GM12878 (cell line): ENCODE measurements at regions of chr1 and their contacts with region 1.

Region 1: DNA sequence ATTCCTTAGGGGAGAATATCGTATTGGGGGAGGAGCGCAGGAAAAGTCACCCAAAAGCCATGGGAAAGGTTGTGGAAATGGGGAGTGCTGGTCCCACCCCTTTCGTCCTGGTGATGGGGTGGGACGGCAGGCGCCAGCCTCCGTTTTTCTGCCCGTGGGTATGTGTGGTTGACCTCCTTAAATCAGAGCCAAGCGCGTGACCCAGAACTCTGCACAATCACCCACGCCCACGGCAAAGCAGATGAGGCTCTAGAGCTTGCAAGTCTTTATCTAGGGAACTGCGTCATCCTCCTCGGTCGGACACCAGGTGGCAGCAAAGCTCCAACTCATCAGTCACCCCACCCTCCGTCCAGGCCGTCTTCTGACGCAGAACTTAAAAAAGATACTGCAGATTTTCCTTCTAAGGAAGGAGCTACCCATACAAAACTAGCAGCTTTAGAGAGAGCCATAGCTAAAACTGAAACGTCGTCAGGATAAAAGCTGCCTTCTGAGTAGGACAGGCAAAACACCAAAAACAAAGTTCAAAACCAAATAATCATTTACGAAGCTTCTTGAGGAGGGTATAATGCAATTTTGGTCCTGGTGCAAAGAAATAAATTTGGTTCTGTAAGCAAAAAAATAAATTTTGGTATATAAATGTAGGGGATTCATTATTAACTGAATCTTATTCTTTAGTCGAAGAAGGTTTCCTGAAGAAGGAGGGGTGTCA is 62.0 kb downstream of the TBX19 start:
- DNase-seq: peak; percentile 61
- ATAC-seq: peak; percentile 98
- H3K4me3 ChIP-seq: no peak overlapping the region
- H3K27ac ChIP-seq: no peak overlapping the region
- H3K4me1 ChIP-seq: peaks cover 10% of the 10 kb centered on the region
- H3K27me3 ChIP-seq: no peaks in the 10 kb centered on the region
- CTCF ChIP-seq: peak; percentile 73 to 91 (median 82)
- EP300 ChIP-seq: no peak
- POLR2A ChIP-seq: no peak
- RAD21 ChIP-seq: peak; percentile 86

Region 2: DNA sequence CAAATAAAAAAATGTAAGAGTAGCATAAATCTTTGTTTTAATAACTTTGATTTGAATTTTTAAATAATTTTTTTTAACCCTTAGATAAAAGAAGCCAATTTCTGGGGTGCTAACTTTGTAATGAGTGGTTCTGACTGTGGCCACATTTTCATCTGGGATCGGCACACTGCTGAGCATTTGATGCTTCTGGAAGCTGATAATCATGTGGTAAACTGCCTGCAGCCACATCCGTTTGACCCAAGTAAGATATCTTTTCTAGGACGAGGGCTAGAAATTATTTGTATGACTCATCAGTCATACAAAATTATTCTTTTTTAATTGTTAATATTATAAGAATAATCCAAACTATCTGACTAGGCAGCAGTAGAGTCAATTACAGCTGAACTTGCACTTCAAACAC is 277.2 kb before region 1 on chr1:
- CTCF ChIA-PET with region 1: no interaction called
- POLR2A ChIA-PET with region 1: no interaction called
- RAD21 ChIA-PET with region 1: no interaction called
- SMC1A ChIA-PET with region 1: no interaction called
- in situ Hi-C with region 1: no loop called
- intact Hi-C with region 1: no loop called
- DNase-seq: no peak
- ATAC-seq: no peak
- H3K4me3 ChIP-seq: no peak overlapping the region
- H3K27ac ChIP-seq: no peak overlapping the region
- H3K4me1 ChIP-seq: no peaks in the 10 kb centered on the region
- H3K27me3 ChIP-seq: no peaks in the 10 kb centered on the region
- CTCF ChIP-seq: no peak
- EP300 ChIP-seq: no peak
- POLR2A ChIP-seq: no peak
- RAD21 ChIP-seq: no peak

Region 3: DNA sequence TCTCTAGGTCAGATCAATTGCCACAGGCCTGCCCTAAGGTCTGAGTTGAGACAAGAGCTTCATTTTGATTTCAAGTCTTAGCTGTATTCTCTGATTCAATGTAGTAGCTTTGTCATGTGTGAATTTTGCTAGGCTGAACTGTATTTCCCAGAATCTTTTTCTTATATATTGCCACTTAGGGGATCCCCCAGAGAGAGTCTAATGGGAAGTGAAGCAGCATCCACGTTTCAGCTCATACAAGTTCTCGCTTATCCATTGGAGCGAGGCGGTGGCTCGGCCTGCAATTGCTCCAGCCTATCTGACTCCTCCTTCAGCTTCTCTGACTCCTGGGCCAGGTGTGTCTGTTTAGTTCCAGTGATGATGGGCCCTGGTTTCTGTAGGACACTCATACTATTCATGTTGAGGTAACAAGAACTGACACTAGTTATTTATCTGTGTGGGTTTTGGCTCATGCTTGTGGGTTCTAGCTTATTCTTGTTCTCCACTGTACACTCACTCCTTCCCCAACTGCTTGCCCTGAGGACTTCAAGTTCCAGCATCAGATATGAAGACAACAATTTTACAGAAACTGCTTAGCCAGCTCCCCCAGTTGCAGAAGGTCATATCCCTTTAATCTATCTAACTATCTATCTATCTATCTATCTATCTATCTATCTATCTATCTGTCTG is 13.9 kb before region 1 on chr1:
- CTCF ChIA-PET with region 1: interaction called, 43 read pairs
- POLR2A ChIA-PET with region 1: no interaction called
- RAD21 ChIA-PET with region 1: interaction called, 8 read pairs
- SMC1A ChIA-PET with region 1: interaction called, 12 read pairs
- in situ Hi-C with region 1: no loop called
- intact Hi-C with region 1: no loop called
- DNase-seq: no peak
- ATAC-seq: no peak
- H3K4me3 ChIP-seq: no peak overlapping the region
- H3K27ac ChIP-seq: no peak overlapping the region
- H3K4me1 ChIP-seq: no peaks in the 10 kb centered on the region
- H3K27me3 ChIP-seq: no peaks in the 10 kb centered on the region
- CTCF ChIP-seq: no peak
- EP300 ChIP-seq: no peak
- POLR2A ChIP-seq: no peak
- RAD21 ChIP-seq: no peak

Region 4: GRCh38 chr1:168408536-168409242 is 66.0 kb after region 1 on chr1:
- CTCF ChIA-PET with region 1: interaction called, 6 read pairs
- POLR2A ChIA-PET with region 1: no interaction called
- RAD21 ChIA-PET with region 1: interaction called, 14 read pairs
- SMC1A ChIA-PET with region 1: interaction called, 11 read pairs
- in situ Hi-C with region 1: no loop called
- intact Hi-C with region 1: no loop called
- DNase-seq: peak; percentile 42
- ATAC-seq: peak; percentile 89
- H3K4me3 ChIP-seq: no peak overlapping the region
- H3K27ac ChIP-seq: no peak overlapping the region
- H3K4me1 ChIP-seq: no peaks in the 10 kb centered on the region
- H3K27me3 ChIP-seq: no peaks in the 10 kb centered on the region
- CTCF ChIP-seq: no peak
- EP300 ChIP-seq: peak in 1 of 2 experiments; percentile 49; a peak in 1 of 4 replicates
- POLR2A ChIP-seq: no peak
- RAD21 ChIP-seq: no peak

Region 5: DNA sequence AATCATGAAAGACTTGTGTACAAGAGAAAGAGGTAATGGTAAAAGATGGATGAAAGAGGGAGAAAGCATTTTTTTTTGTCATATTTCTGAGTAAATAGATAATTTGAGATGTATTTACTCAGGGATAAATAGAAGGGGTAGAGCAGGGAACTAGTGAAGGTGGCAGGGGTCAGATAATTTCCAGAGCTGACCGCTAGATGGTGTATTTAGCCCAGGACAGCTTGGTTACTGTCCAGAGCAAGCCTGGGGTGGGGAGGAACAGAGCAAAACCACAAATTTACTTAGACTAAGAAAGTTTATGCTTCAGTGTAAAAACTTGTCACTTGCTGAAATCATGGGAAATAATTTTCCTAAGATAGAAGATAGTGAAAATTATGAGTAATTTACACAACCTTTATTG is 109.6 kb after region 1 on chr1:
- CTCF ChIA-PET with region 1: interaction called, 283 read pairs
- POLR2A ChIA-PET with region 1: no interaction called
- RAD21 ChIA-PET with region 1: interaction called, 25 read pairs
- SMC1A ChIA-PET with region 1: interaction called, 7 read pairs
- in situ Hi-C with region 1: no loop called
- intact Hi-C with region 1: no loop called
- DNase-seq: no peak
- ATAC-seq: peak; percentile 63
- H3K4me3 ChIP-seq: no peak overlapping the region
- H3K27ac ChIP-seq: no peak overlapping the region
- H3K4me1 ChIP-seq: no peaks in the 10 kb centered on the region
- H3K27me3 ChIP-seq: no peaks in the 10 kb centered on the region
- CTCF ChIP-seq: peak; percentile 24 to 32 (median 29); a peak in 2 of 6 replicates
- EP300 ChIP-seq: no peak
- POLR2A ChIP-seq: no peak
- RAD21 ChIP-seq: peak; percentile 42

Region 6: DNA sequence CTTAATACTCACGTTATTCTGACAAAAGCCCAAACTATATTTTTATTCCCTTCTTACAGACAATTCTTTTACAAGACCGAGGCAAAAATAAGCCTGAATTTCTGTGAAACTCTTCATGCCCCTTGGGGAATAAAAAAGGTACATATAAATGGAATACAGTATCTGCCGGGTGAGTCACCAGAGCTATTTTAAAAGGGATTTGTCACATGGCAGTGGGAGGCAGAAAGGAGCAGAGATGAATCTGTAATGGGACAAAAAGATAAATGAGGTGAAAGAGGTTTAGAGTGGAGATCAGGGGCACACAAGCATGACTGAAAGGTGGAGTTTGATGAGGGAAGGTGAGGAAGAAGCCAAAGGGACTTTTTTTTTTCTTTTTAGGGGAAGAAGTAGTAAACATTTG is 242.5 kb after region 1 on chr1:
- CTCF ChIA-PET with region 1: interaction called, 8 read pairs
- POLR2A ChIA-PET with region 1: no interaction called
- RAD21 ChIA-PET with region 1: interaction called, 18 read pairs
- SMC1A ChIA-PET with region 1: interaction called, 16 read pairs
- in situ Hi-C with region 1: no loop called
- intact Hi-C with region 1: no loop called
- DNase-seq: no peak
- ATAC-seq: no peak
- H3K4me3 ChIP-seq: no peak overlapping the region
- H3K27ac ChIP-seq: no peak overlapping the region
- H3K4me1 ChIP-seq: no peaks in the 10 kb centered on the region
- H3K27me3 ChIP-seq: peaks cover 0 to 2% of the 10 kb centered on the region in 2 experiments; a peak in 1 of 4 replicates
- CTCF ChIP-seq: no peak
- EP300 ChIP-seq: no peak
- POLR2A ChIP-seq: no peak
- RAD21 ChIP-seq: no peak

Region 7: GRCh38 chr1:169348383-169349036 is 1005.8 kb after region 1 on chr1:
- CTCF ChIA-PET with region 1: interaction called, 74 read pairs
- POLR2A ChIA-PET with region 1: no interaction called
- RAD21 ChIA-PET with region 1: interaction called, 57 read pairs
- SMC1A ChIA-PET with region 1: interaction called, 53 read pairs
- in situ Hi-C with region 1: no loop called
- intact Hi-C with region 1: loop called (anchors 1 kb)
- DNase-seq: peak; percentile 19
- ATAC-seq: peak; percentile 61
- H3K4me3 ChIP-seq: no peak overlapping the region
- H3K27ac ChIP-seq: no peak overlapping the region
- H3K4me1 ChIP-seq: no peaks in the 10 kb centered on the region
- H3K27me3 ChIP-seq: no peaks in the 10 kb centered on the region
- CTCF ChIP-seq: peak; percentile 57 to 78 (median 62)
- EP300 ChIP-seq: no peak
- POLR2A ChIP-seq: no peak
- RAD21 ChIP-seq: peak; percentile 92